Prostate gland (tissue), 2 donors: ENCODE measurements at regions of chr12 and their contacts with region 1.

Region 1: DNA sequence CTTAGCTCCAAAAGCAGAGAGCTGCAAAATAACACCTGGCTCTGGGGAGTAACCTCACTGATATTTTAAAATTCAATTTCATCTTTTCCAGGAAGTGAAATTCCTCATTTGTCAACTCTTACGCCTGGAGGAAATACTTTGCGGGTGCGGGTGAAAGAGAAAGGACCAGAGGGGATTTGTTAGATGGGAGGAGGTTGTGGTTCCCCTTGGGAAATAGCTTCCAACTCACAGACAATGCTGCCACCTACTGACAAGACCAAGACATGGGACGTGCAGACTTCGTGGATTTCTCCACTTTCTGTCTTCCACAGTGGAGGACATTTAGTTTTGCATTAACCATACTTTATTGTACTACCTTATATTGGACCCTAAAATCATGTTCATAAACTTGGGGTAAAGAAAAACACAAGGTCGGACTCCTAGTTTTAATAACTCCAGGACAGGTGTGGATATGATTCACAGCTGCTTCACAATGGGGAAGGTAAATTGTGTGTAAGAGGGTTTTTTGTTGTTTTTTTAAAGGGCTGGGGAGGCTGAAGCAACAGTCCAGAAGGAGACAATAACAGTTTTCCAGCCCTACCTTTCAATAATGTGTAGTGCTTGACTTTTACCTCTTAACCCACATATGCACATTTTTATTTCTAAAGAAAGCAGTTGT is 10.8 kb downstream of the FBXL14 start:
- DNase-seq: peak; percentile 71
- H3K4me3 ChIP-seq: peak overlapping the region in 1 of 2 donors; percentile 7
- H3K27ac ChIP-seq: no peak overlapping the region
- H3K4me1 ChIP-seq: peaks cover 3% of the 10 kb centered on the region
- H3K27me3 ChIP-seq: no peaks in the 10 kb centered on the region
- CTCF ChIP-seq: peak; percentile 62 to 93 (median 89)
- POLR2A ChIP-seq: no peak

Region 2: GRCh38 chr12:1117970-1118563 is 465.5 kb before region 1 on chr12:
- intact Hi-C with region 1: loop called (anchors 2 kb)
- DNase-seq: peak; percentile 80
- H3K4me3 ChIP-seq: no peak overlapping the region
- H3K27ac ChIP-seq: no peak overlapping the region
- H3K4me1 ChIP-seq: no peaks in the 10 kb centered on the region
- H3K27me3 ChIP-seq: no peaks in the 10 kb centered on the region
- CTCF ChIP-seq: peak; percentile 84 to 96 (median 92)
- POLR2A ChIP-seq: no peak